GM10248 (cell line): ENCODE measurements at regions of chr2 and their contacts with region 1.

Region 1: DNA sequence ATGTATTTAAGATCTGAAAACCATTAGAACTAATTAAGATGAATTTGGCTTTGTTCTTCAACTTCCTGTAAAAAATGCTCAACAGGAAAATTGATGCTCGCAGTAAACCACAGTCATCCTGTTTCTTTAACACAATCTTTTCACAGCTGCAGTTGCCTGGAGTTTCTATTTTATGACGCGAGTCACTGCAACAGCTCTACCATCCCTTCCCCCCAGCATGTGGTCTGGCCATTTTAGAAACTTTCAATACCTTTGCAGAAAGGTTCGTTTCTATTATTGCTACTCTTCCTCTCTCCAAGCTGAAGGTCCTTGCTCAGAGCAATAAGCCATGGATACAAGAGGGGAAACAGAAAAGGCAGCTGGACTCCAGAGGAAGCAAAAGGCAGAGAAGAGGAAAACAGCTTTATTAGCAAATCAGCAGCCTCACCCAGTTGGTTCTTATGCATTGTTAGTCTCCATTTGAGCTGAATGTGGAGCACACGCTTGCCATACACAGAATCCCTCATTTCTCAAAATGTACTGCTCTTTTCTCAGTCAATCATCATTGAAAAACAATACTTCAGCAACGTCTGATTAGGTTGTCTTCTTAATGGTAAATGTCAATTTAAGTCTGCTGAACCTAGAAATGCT is 3.9 kb downstream of the WIPF1 start:
- DNase-seq: peak; percentile 50
- CTCF ChIP-seq: no peak

Region 2: GRCh38 chr2:174577967-174578589 is 15.6 kb before region 1 on chr2:
- CTCF ChIA-PET with region 1: interaction called, 14 read pairs
- POLR2A ChIA-PET with region 1: no interaction called
- DNase-seq: no peak
- CTCF ChIP-seq: peak; percentile 49

Region 3: DNA sequence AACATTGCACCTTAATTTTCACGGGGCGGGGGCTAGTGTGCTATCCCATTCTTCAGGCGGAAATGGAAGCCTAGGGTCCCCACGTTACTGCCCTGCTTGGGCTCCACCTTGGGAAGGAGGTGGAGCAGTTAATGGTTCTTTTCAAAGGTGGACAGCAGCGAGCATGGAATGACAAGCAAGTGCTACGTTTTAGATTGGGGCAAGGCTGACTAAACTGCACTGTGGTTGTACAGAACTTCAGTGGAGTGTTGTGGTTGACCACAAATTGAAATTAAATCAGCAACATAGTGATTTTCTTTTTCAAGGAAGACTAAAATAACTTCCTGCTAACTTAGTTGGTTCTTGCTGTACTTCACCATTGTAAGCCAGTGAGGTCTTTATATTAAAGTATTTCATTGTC is 123.6 kb after region 1 on chr2:
- CTCF ChIA-PET with region 1: no interaction called
- POLR2A ChIA-PET with region 1: no interaction called
- DNase-seq: no peak
- CTCF ChIP-seq: no peak

Region 4: DNA sequence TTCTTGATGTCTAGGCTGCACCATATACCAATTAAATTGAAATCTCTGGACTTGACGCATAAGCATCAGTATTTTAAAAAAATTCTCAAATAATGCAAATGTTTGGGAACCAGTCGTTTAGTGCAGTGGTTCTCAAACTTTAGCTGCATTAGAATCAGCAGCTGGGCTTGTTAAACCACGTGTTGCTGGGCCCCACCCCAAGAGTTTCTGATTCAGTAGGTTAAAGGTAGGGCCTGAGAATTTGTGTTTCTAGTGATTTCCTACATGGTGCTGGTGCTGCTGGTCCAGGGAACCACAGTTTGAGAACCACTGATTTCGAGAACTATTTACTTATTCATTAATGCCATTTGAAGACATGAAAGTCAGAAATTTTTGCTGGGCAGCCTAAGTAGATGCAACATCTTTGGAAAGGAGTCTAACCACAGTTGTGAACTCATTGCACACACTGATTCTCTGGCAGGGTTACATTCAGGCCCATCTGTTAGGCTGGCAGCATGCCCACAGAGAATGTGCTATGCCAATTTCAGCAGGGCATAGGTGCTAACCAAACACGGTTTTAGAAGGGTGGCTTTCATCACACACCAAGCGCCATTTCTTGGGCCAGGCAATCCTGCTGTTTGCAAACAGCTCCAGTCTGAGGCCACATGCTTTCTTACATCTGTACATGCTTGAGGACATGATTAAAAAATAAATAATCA is 614.2 kb after region 1 on chr2:
- CTCF ChIA-PET with region 1: no interaction called
- POLR2A ChIA-PET with region 1: no interaction called
- DNase-seq: no peak
- CTCF ChIP-seq: no peak